ENCODE measurements at regions of chr19 and their contacts with region 1.

Region 1: DNA sequence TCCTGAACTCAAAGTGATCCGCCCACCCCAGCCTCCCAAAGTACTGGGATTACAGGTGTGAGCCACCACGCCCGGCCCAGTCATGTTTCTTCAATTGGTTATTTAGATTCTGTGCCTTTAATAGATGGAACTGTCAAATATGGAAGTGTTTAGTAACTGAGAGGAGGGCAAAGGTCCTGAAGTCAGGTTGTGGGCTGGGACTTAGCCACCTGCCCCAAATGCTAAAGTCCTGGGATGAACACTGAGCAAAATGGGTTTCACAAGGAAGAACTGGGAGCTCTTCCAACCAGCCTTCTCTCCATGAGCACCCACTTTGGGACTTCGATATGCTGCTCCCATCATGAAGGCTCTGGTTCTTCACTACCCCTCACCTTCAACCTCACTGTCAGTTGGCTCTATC is 21.7 kb downstream of the AKAP8 start:
- DNase-seq: no peak
- H3K4me3 ChIP-seq: no peak overlapping the region
- H3K27ac ChIP-seq: no peak overlapping the region
- H3K27me3 ChIP-seq: no peaks in the 10 kb centered on the region
- CTCF ChIP-seq: no peak

Region 2: DNA sequence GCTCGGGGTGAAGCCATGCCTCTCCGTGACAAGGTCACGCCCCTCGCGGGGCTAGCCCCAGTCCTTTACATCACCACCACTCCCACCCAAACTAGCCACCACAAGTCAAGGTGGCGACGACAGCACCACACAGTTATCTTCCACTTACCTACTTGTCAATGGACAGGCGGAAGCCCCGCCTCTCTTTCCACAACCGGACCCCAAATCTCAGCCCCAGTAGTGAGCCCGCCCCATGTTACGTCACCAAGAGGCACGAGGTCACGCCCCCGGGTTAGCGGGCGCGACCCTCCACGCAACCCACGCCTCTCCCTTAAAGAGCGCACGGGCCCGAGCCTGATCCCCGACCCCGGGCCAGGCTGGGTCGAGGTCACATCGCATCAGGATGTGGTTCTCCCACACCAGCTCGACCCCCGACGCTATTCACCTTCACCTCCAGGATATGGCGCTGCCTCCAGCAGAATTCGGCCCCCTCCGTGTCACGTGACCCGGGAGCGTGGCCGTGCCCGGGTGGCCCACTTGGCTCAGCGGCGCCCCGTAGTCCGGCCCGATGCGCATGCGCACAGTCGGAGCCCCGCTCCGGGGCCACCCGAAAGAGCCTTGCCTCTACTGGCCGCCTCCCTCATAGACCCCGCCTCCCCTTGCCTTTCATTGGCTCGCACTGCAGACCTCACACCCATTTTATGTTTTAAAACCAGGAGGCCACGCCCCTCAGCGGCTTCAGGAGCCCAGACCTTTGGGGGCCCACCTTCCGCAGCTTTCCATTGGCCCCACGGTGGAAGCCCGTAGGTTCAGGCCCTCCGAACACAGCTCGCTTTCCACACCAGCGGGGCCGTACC is 232.5 kb before region 1 on chr19:
- CTCF ChIA-PET with region 1: no interaction called
- POLR2A ChIA-PET with region 1: interaction called, 10 read pairs
- DNase-seq: peak; percentile 92
- H3K4me3 ChIP-seq: peak overlapping the region; percentile 89
- H3K27ac ChIP-seq: peak overlapping the region; percentile 47
- H3K27me3 ChIP-seq: no peaks in the 10 kb centered on the region
- CTCF ChIP-seq: peak; percentile 19